Common myeloid progenitor, CD34-positive (primary cell): ENCODE measurements at regions of chr9 and their contacts with region 1.

Region 1: GRCh38 chr9:120875954-120876841 is 790 bp downstream of the PHF19 start:
- DNase-seq: peak; percentile 92 to 97 (median 95)
- H3K4me3 ChIP-seq: peak overlapping the region; percentile 51 to 81 (median 73)
- H3K27ac ChIP-seq: peak overlapping the region; percentile 59 to 93
- H3K4me1 ChIP-seq: peaks cover 8 to 41% (median 30%) of the 10 kb centered on the region in 4 experiments
- H3K27me3 ChIP-seq: no peaks in the 10 kb centered on the region

Region 2: DNA sequence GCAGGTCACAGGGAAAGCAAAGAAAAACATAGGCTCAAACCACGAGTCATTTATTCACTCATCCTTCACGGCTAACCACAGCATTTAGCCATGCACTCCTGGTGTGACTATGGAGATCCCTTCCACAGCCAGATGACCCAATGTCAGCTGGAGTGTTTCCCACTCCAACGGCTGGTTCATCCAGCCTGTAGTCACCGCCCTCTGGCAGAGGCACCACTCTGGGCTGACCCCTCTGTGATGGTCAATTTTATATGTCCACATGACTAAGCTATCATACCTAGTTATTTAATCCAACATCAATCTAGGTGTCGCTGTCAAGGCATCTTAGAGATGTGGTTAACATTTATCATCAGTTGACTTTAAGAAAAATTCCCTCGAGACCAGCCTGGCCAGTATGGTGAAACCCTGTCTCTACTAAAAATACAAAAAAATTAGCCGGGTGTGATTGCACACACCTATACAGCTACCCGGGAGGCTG is 10.3 kb after region 1 on chr9:
- CTCF ChIA-PET with region 1: interaction called, 13 read pairs
- POLR2A ChIA-PET with region 1: interaction called, 5 read pairs
- DNase-seq: no peak
- H3K4me3 ChIP-seq: no peak overlapping the region
- H3K27ac ChIP-seq: no peak overlapping the region
- H3K4me1 ChIP-seq: peaks cover 7 to 35% (median 28%) of the 10 kb centered on the region in 4 experiments
- H3K27me3 ChIP-seq: no peaks in the 10 kb centered on the region

Region 3: DNA sequence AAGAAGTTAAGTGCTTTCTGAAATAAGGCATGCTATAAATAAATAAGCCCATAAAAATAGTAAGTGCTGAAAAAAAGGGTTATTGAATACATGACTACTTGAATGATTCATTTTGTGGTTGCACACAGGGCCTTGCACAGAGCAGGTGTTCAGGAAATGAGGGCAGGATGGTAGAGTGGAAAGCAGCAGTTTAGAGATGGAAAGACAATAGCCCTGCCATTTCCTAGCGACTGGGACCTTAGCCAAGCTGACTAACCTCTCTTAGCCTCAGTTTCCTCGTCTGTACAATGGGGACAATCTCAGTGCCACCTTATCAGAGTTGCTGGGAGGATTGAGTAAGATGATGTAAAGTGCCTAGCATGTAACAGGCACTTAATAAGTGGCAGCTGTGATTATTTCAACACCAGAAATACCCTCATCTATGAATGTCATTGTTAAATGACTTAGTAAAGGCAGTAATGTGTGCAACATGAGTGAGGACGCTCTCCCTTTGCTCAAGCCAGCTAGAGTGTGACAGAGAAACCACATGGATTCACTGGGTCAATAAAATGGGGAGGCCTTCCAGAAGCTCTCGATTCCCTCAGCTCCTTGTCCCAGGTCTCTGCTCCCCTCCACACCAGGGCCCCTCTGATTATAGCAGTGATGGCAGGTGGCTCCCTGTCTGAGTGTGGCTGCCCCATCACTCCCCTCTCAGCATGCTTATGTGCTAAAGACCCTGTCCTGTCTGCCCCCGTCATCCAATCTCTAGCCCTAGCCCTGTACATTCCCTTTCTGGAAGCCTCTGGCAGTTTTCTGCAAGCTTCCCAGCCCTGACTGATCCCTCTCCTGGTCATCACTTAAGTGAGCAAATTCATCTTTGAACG is 16.8 kb after region 1 on chr9:
- CTCF ChIA-PET with region 1: interaction called, 13 read pairs
- POLR2A ChIA-PET with region 1: interaction called, 6 read pairs
- DNase-seq: peak; percentile 89 to 99 (median 98)
- H3K4me3 ChIP-seq: no peak overlapping the region
- H3K27ac ChIP-seq: peak overlapping the region in 1 of 2 experiments; percentile 28
- H3K4me1 ChIP-seq: peaks cover 13 to 56% (median 49%) of the 10 kb centered on the region in 4 experiments
- H3K27me3 ChIP-seq: no peaks in the 10 kb centered on the region